ENCODE measurements at regions of chr9 and their contacts with region 1.

Region 1: DNA sequence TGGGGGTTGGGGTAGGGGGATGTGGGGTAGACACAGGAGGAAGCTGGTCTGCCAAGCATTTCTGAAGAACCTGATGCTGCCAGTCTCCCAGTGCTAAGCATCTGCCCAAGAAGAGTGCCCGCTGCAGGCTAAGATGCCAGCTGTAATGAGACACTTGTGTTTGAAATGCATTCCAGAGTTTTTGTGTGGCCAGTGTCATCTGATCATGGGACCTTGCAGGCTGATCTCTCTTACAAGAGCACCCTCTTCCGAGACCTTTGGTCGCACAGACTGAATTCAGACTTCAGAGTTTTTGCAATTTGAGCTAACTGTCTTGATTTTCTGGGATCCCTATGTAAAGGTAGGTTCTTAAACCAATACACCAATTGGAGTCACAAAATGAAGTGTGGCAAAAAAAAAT is 58.1 kb downstream of the DENND1A start:
- DNase-seq: no peak
- ATAC-seq: peak; percentile 59 to 90 (median 80)
- H3K4me3 ChIP-seq: no peak overlapping the region
- H3K27ac ChIP-seq: no peak overlapping the region
- H3K4me1 ChIP-seq: peaks cover 10% of the 10 kb centered on the region
- H3K27me3 ChIP-seq: no peaks in the 10 kb centered on the region
- CTCF ChIP-seq: peak; percentile 24

Region 2: DNA sequence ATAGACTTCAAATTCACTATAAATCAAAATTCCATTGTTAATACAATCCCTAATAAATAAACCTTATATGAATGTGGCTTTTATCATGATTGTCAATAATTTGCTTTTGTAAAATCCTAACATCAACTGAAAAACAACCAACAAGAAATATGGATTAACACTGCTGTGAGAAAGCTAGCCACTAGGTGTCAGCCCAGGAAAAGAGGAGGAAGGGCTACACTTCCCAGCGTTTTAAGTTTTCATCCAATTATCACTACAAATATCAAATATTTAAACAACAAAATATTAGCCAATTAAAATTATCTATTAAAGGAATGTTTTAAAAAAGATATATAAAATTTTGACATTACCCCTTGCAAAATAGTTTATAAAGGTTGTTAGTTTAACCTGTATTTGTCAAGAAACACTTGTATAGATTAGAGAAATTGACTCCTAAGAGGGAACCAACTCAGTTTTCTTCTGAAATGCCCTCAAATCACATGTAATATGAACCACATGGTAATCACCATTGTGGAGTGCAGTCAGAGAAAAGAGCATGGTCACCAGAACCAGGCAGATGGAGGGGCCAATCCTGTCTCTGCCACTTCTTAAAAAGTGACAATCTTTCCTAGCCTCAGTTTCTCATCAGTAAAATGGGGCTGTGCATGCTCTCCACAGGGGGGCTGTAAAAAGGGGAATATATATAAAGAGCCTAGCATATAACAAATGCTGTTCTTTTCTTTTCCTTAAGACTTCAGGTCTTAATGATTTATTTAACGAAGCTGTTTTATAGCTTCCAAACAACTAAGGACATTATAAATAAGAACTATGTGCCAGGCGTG is 327.6 kb before region 1 on chr9:
- intact Hi-C with region 1: loop called in 1 of 2 experiments (anchors 5 kb)
- DNase-seq: no peak
- ATAC-seq: peak in 1 of 4 donors; percentile 67
- H3K4me3 ChIP-seq: no peak overlapping the region
- H3K27ac ChIP-seq: no peak overlapping the region
- H3K4me1 ChIP-seq: no peaks in the 10 kb centered on the region
- H3K27me3 ChIP-seq: no peaks in the 10 kb centered on the region
- CTCF ChIP-seq: peak; percentile 84

Region 3: GRCh38 chr9:123834889-123835562 is 36.8 kb before region 1 on chr9:
- intact Hi-C with region 1: no loop called
- DNase-seq: no peak
- ATAC-seq: peak in 1 of 4 donors; percentile 36
- H3K4me3 ChIP-seq: peak overlapping the region; percentile 6
- H3K27ac ChIP-seq: no peak overlapping the region
- H3K4me1 ChIP-seq: peaks cover 11% of the 10 kb centered on the region
- H3K27me3 ChIP-seq: no peaks in the 10 kb centered on the region
- CTCF ChIP-seq: no peak

Measured in psoas muscle (tissue), 8 donors.